ENCODE measurements at regions of chr6 and their contacts with region 1.

Region 1: GRCh38 chr6:37018198-37019064 is 13.0 kb downstream of the FGD2 start:
- DNase-seq: peak; percentile 90
- ATAC-seq: peak; percentile 95
- H3K4me3 ChIP-seq: no peak overlapping the region
- H3K27ac ChIP-seq: no peak overlapping the region
- H3K4me1 ChIP-seq: peaks cover 39% of the 10 kb centered on the region
- H3K27me3 ChIP-seq: peaks cover 4 to 15% of the 10 kb centered on the region in 2 experiments; a peak in 2 of 5 replicates
- CTCF ChIP-seq: peak; percentile 92
- EP300 ChIP-seq: no peak
- POLR2A ChIP-seq: no peak
- RAD21 ChIP-seq: peak; percentile 82

Region 2: DNA sequence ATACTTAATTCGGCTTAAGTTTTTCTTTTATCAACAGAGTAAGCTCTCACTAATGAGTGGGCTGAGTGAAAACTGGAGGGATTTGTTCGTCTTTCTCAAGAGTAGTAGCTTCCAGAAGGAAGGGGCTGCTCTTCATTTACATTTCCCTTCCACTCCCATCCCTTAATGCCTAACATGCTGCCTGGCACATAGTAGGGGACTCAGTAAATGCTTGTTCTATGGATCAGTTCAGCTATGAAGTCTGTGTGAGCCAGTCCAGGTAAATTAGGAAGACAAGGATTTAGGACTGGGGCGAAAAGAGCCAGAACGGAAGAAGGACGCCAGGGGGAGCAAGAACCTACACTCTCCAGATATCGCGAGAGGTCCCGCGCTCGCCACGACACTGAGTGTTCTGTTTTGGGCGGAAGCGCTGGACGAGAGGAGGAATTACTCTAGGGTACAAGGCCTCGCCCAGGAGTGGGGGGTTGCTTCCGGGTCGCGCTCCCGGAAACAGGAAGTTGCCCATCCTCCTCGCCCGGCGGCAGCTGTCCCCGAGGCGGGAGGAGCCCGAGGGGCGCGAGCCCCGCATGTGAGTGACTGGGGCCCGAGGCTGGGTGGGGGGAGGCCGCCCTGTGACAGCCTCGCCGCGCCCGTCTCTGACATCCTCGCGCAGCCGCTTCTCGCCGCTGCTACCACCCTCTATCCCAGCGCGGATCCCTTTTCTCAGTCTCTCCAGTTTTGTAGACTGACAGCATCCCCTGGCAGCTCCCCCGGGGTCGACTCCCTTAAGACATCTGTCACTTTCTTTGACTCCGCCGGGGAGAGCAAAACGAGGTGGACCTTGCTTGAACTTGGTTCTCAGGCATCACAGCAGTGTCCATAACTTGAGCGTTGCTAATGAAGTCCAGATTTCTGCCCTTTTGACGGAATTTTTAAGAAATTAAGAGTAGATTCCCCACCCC is 132.7 kb before region 1 on chr6 and contains the start of gene C6orf89:
- CTCF ChIA-PET with region 1: interaction called, 23 read pairs
- POLR2A ChIA-PET with region 1: interaction called, 9 read pairs
- in situ Hi-C with region 1: loop called (anchors 10 kb)
- intact Hi-C with region 1: loop called (anchors 1 kb)
- DNase-seq: peak; percentile 99
- ATAC-seq: peak; percentile 99
- H3K4me3 ChIP-seq: peak within 1 kb of the TSS; percentile 77 to 82 (median 77)
- H3K27ac ChIP-seq: peak within 1 kb of the TSS; percentile 74
- H3K4me1 ChIP-seq: peaks cover 15% of the 10 kb centered on the region
- H3K27me3 ChIP-seq: no peaks in the 10 kb centered on the region; a peak in 2 of 5 replicates
- CTCF ChIP-seq: peak; percentile 98
- EP300 ChIP-seq: peak in 1 of 2 experiments; percentile 55; a peak in 2 of 4 replicates
- POLR2A ChIP-seq: peak; percentile 42 to 63; a peak in 3 of 4 replicates
- RAD21 ChIP-seq: peak; percentile 63; the same call in 1 of the 2 replicates
- total RNA-seq, gene C6orf89: 23.9 and 32.2 TPM in 2 replicates

Region 3: DNA sequence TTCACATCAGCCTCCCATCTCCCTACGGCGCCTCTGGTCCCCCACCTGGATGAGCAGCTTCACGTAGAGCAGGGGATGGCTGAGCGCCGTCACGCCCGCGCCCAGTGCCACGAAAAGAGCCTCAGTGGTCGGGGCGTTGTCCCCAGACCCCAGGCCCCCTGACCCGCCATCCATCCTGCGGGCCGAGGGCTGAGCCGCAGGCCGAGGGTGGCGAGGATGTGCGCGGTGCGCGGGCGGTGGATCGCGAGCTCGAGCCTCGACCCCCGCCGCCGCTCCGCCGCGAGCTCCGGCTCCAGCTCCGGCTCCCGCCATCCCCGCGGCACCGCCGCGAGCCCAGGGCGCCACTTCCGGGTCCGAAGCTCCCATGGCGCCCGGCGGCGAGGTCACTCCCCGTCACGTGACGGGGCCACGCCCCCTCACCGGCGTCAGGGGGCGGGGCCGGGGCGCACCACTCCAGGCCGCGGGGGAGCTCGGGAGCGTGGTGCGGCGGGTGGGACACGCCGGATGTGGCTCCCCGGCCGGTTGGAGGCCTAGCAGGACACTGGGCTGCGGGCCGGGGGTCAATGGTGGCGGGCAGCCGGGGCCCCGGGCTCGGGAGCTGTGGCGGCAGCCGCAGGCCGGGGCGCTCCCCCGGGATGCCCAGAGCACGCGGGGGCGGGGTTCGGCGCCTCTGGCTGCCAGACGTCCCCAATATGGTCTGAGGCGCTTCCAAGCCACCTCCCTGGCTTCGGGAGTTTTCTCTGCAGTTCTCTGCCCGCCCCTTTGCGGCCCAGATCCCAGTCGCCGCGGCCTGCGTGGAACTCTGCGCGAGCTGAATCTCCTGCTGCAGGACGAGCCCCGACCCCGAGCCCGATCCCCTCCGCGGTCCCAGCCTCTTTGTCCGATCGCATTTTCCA is 32.4 kb before region 1 on chr6 and contains the start of gene MTCH1:
- CTCF ChIA-PET with region 1: interaction called, 4 read pairs
- POLR2A ChIA-PET with region 1: interaction called, 14 read pairs
- in situ Hi-C with region 1: no loop called
- intact Hi-C with region 1: no loop called
- DNase-seq: peak; percentile 81
- ATAC-seq: peak; percentile 92
- H3K4me3 ChIP-seq: peak within 1 kb of the TSS; percentile 71 to 99 (median 91)
- H3K27ac ChIP-seq: peak within 1 kb of the TSS; percentile 74
- H3K4me1 ChIP-seq: peaks cover 30% of the 10 kb centered on the region
- H3K27me3 ChIP-seq: peaks cover 2 to 15% of the 10 kb centered on the region in 2 experiments; a peak in 3 of 5 replicates
- CTCF ChIP-seq: no peak
- EP300 ChIP-seq: peak in 1 of 2 experiments; percentile 35; a peak in 2 of 4 replicates
- POLR2A ChIP-seq: peak; percentile 92 to 94
- RAD21 ChIP-seq: peak; percentile 69; the same call in 1 of the 2 replicates
- total RNA-seq, gene MTCH1: 115 and 144 TPM in 2 replicates

Region 4: GRCh38 chr6:37051138-37052026 is 33.0 kb after region 1 on chr6:
- CTCF ChIA-PET with region 1: interaction called, 5 read pairs
- POLR2A ChIA-PET with region 1: no interaction called
- in situ Hi-C with region 1: no loop called
- intact Hi-C with region 1: loop called (anchors 5 kb)
- DNase-seq: peak; percentile 70
- ATAC-seq: peak; percentile 82
- H3K4me3 ChIP-seq: peak overlapping the region in 2 of 3 experiments; percentile 12 to 64; a peak in 3 of 6 replicates
- H3K27ac ChIP-seq: no peak overlapping the region
- H3K4me1 ChIP-seq: peaks cover 78% of the 10 kb centered on the region
- H3K27me3 ChIP-seq: peaks cover 2 to 17% of the 10 kb centered on the region in 2 experiments; a peak in 4 of 5 replicates
- CTCF ChIP-seq: peak; percentile 100
- EP300 ChIP-seq: no peak
- POLR2A ChIP-seq: no peak
- RAD21 ChIP-seq: peak; percentile 100

Region 5: GRCh38 chr6:37207903-37208456 is 189.5 kb after region 1 on chr6:
- CTCF ChIA-PET with region 1: interaction called, 268 read pairs
- POLR2A ChIA-PET with region 1: interaction called, 5 read pairs
- in situ Hi-C with region 1: loop called (anchors 5 kb)
- intact Hi-C with region 1: loop called (anchors 1 kb)
- DNase-seq: peak; percentile 87
- ATAC-seq: peak; percentile 89
- H3K4me3 ChIP-seq: no peak overlapping the region
- H3K27ac ChIP-seq: no peak overlapping the region
- H3K4me1 ChIP-seq: peaks cover 35% of the 10 kb centered on the region
- H3K27me3 ChIP-seq: peaks cover 2 to 13% of the 10 kb centered on the region in 2 experiments; a peak in 2 of 5 replicates
- CTCF ChIP-seq: peak; percentile 96
- EP300 ChIP-seq: no peak
- POLR2A ChIP-seq: no peak
- RAD21 ChIP-seq: peak; percentile 92

Measured in HepG2 (cell line).